ENCODE measurements at regions of chr7 and their contacts with region 1.

Region 1: DNA sequence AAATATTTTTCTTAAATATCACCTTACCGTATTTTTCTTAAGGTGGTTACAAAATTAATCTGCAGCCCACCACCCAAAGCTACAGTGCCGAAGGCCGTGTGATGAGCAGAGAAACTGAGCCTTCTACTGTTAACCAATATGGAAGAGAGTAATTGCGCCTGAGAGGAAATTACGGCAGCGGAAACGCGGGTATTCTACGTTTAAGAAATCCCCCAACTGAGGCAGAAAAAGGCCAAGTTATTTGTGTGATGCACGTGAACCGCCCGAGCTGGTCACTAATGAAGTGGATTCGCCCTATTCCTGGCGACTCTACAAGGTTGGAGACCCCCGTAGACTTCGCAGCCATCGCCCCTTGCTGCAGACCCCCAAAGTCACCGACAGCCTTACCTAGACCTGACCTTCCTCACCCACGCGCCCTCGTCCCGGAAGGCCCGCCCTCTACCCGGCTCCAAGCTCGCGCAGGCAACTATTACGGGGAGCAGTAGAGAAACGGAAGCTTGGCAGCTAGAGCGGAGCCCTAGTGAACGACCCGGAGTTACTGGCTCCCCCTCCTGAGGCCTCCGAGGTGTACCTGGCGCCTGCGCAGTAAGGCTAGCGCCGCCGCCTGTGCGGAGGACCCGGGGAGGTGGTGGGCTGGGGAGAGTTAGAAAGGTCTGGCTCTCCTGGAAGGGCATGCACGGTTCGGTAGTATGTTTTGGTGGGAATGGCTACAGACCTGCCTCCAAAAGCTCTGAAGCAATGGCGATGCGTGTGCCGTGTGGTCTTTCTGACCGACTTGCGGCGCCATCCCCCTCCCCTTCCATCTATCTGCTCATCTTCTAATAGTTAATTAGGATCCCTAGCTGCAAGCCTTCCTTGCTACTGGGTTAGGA is at the start of gene MRPS33:
- DNase-seq: peak; percentile 97
- H3K4me3 ChIP-seq: peak within 1 kb of the TSS; percentile 87
- H3K27ac ChIP-seq: peak within 1 kb of the TSS; percentile 69
- H3K4me1 ChIP-seq: peaks cover 20% of the 10 kb centered on the region
- CTCF ChIP-seq: peak; percentile 85
- total RNA-seq, gene MRPS33: 21.1 and 42.0 TPM in 2 replicates

Region 2: DNA sequence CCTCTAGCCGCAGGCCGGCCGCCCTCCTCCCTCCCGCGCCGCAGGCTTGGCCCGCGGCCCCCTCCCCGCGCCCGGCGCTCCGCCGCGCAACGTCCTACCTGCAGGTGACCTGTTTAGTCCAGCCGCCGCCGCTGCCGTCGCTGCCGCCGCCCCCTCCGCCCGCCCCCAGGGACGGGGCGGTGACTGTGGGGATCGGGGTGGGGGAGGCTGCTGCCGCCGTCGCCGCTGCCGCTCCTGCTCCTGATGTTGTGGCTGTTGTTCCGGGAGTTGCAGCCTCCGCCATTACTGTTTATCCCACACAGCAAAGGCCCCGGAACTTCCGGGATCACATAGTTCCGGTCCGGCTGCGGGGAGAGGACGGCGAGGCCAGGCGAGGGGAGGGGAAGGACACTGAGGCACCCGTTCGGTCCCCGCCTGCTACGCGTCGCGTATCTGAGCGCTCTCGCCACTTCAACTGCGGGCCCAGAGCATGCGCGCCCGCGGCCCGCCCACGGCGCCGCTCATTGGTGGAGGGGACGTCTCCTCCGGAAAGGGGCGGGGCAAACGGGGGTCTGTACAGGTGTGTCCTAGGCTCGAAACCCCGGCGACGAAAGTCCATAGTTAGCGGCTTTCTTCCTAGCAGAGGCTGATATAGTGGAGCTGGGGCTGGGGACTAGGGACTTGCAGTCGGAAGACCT is 535.6 kb before region 1 on chr7 and contains the start of gene MKRN1:
- CTCF ChIA-PET with region 1: no interaction called
- POLR2A ChIA-PET with region 1: no interaction called
- intact Hi-C with region 1: loop called (anchors 2 kb)
- DNase-seq: peak; percentile 94
- H3K4me3 ChIP-seq: peak within 1 kb of the TSS; percentile 98
- H3K27ac ChIP-seq: peak within 1 kb of the TSS; percentile 72
- H3K4me1 ChIP-seq: peaks cover 24% of the 10 kb centered on the region
- CTCF ChIP-seq: no peak
- total RNA-seq, gene MKRN1: 26.4 and 47.5 TPM in 2 replicates

Region 3: DNA sequence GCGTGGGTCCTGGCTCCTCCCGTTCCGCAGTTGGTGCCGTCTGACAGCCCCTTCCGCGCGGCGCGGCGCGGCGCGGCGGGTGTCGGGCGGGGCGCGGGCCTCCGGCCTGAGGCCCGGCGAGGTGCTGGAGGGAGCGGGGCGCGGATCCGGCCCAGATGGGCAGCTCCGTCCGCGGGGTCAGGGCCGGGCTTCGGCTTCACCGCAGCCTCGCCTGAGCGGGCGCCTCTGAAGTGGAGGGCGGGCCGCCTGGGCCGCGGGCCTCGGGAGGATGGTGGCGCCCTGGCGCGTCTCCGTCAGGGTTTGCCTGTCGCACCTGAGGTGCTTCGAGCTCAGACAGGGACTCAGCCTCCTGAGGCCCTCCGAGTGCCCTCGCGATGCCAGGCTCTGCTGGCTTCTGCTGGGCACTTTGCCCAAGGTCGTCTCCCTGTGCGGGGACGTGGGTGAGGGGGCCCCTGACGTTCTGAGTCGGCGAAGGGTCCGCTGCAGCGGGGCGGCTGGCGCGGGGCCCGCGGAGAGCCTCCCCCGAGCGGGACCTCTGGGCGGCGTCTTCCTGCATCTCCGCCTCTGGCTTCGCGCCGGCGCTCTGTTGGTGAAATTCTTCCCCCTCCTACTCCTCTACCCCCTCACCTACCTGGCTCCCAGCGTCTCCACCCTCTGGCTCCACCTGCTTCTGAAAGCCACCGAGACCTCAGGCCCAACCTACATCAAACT is 341.5 kb before region 1 on chr7:
- CTCF ChIA-PET with region 1: interaction called, 3 read pairs
- POLR2A ChIA-PET with region 1: interaction called, 4 read pairs
- intact Hi-C with region 1: loop called (anchors 1 kb)
- DNase-seq: peak; percentile 69
- H3K4me3 ChIP-seq: peak overlapping the region; percentile 81
- H3K27ac ChIP-seq: peak overlapping the region; percentile 98
- H3K4me1 ChIP-seq: peaks cover 63% of the 10 kb centered on the region
- CTCF ChIP-seq: peak; percentile 29; the same call in 1 of the 2 replicates

Region 4: DNA sequence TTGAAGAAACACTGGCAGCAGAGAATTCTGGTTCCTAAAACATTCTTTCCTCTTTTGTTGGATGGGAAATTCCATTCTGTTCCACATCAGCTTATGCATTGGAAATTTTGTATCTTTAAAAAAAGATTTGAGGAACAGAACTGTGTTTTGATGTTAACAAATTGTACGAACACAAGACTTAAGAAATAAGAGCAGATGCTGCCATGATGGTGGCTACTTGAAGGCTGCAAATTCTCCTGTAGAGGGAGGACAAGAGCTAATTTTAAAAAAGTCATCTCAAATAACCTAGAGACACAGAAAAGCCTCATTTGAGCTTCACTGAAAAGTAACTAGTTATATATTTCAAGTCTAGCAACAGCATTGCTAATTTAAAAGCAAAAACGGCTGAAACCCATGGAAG is 288.5 kb before region 1 on chr7:
- CTCF ChIA-PET with region 1: no interaction called
- POLR2A ChIA-PET with region 1: interaction called, 3 read pairs
- intact Hi-C with region 1: loop called (anchors 10 kb)
- DNase-seq: peak; percentile 24
- H3K4me3 ChIP-seq: no peak overlapping the region
- H3K27ac ChIP-seq: no peak overlapping the region
- H3K4me1 ChIP-seq: no peaks in the 10 kb centered on the region
- CTCF ChIP-seq: peak; percentile 68

Region 5: DNA sequence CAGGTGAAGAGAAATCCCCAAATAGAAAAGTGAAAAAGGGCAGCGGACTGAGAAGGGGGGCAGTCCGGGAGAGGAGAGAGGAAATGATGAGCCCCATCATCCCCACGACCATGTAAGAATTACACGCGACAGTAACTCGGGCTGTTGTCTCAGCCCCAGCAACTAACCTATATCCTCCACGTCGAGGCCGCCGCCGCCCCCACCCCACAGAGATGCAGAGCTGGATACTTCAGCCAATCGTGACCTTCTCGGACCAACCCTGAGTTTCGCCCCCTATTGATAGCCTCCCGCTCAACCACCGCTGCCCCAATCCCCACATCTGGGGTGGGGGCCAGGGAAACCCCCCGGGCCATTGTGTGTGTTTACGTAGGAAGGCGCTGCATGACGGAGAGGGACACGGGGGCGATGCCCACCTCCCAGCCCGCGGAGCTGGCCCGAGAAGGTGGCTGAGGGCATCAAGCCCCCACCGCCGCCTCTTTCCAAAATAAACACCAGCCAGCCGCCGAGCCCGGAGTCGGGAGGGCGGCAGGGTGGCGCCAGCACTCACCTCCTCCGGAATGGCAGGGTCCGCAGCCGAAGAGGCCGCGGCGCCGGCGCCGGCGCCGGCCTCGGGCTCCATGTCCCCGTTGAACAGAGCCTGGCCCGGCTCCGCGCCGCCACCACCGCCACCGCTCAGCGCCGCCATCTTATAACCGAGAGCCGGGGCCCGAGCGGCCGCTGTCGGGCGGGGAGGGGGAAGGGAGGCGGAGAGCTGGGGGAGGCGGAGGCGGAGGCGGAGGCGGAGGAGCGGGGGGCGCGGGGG is 90.5 kb before region 1 on chr7:
- CTCF ChIA-PET with region 1: no interaction called
- POLR2A ChIA-PET with region 1: interaction called, 3 read pairs
- intact Hi-C with region 1: loop called (anchors 1 kb)
- DNase-seq: peak; percentile 80
- H3K4me3 ChIP-seq: peak overlapping the region; percentile 92
- H3K27ac ChIP-seq: peak overlapping the region; percentile 73
- H3K4me1 ChIP-seq: peaks cover 36% of the 10 kb centered on the region
- CTCF ChIP-seq: peak; percentile 76

Region 6: DNA sequence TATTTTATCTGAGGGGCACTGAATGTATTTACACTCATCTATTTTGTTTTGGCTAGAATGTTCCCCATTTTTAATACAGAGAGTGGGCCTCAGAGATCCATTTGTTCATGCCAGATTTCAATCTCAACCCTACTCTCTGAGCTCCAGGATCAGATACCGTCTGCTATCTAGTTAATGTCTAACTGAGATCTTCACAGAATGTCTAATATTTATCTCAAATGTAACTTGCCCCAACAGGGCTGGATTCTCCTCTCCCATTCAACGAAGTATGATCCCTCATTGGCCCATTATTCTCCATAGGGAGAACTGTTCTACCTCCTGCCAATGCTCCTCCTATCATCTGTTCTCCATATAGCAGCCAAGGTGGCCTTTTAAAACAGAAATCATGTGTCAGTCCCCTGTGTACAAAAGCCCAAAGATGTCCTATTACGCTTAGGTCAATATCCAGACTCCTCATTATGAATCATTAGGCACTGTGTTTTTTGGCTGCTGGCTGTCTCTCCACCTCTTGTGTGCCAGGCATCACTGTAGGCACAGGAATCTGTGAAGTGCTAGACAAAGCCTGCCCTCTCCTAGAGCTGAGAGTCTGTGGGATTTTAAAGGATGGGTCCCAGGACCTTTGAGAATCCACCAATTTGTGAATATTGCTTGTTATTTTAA is 367.2 kb after region 1 on chr7:
- CTCF ChIA-PET with region 1: no interaction called
- POLR2A ChIA-PET with region 1: no interaction called
- intact Hi-C with region 1: no loop called
- DNase-seq: no peak
- H3K4me3 ChIP-seq: no peak overlapping the region
- H3K27ac ChIP-seq: no peak overlapping the region
- H3K4me1 ChIP-seq: no peaks in the 10 kb centered on the region
- CTCF ChIP-seq: no peak

Region 7: GRCh38 chr7:141737834-141738591 is 723.3 kb after region 1 on chr7 and contains the start of gene SSBP1:
- CTCF ChIA-PET with region 1: no interaction called
- POLR2A ChIA-PET with region 1: no interaction called
- intact Hi-C with region 1: loop called (anchors 5 kb)
- DNase-seq: peak; percentile 96
- H3K4me3 ChIP-seq: peak within 1 kb of the TSS; percentile 79
- H3K27ac ChIP-seq: peak within 1 kb of the TSS; percentile 73
- H3K4me1 ChIP-seq: peaks cover 28% of the 10 kb centered on the region
- CTCF ChIP-seq: peak; percentile 95
- total RNA-seq, gene SSBP1: 177 and 235 TPM in 2 replicates

Measured in OCI-LY7 (cell line).